ENCODE measurements at regions of chr15 and their contacts with region 1.

Region 1: DNA sequence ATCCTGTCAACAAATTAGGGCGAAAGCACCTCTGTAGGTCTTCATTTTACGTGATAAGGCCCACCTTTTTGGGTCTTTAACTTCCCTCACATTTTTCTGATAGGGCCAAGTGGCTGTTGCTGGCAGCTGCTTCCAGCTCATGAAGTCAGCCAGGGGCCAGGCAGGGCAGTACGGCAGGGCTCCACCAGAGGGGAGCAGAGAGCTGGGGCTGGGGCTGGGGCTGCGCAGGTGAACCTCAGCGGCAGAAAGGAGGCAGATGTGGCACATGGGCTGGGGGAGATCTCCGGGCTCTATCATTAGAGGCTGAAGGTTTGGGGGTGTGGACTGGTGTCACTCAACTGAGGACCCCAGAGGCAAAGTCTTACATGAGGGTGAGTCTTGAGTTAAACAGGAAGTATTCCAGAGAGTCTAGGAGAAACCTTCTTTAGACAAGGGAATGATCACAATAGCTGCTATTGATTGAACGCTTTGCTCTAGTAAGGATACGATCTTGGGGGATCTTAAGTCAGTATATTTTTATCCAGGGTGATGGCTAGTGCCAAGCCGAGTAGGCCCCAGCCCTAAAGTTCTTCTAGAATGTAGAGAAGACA is 62.8 kb upstream of the MEX3B start:
- DNase-seq: peak; percentile 59 to 79 (median 78)
- H3K4me3 ChIP-seq: no peak overlapping the region
- H3K27ac ChIP-seq: no peak overlapping the region
- H3K4me1 ChIP-seq: peaks cover 0 to 3% (median 0%) of the 10 kb centered on the region in 4 experiments
- H3K27me3 ChIP-seq: no peaks in the 10 kb centered on the region

Region 2: GRCh38 chr15:81410318-81410753 is 698.2 kb before region 1 on chr15:
- CTCF ChIA-PET with region 1: interaction called, 45 read pairs
- POLR2A ChIA-PET with region 1: no interaction called
- DNase-seq: peak; percentile 81 to 92 (median 89)
- H3K4me3 ChIP-seq: peak overlapping the region in 1 of 7 experiments; percentile 56
- H3K27ac ChIP-seq: no peak overlapping the region
- H3K4me1 ChIP-seq: peaks cover 4 to 24% (median 20%) of the 10 kb centered on the region in 4 experiments
- H3K27me3 ChIP-seq: no peaks in the 10 kb centered on the region

Region 3: DNA sequence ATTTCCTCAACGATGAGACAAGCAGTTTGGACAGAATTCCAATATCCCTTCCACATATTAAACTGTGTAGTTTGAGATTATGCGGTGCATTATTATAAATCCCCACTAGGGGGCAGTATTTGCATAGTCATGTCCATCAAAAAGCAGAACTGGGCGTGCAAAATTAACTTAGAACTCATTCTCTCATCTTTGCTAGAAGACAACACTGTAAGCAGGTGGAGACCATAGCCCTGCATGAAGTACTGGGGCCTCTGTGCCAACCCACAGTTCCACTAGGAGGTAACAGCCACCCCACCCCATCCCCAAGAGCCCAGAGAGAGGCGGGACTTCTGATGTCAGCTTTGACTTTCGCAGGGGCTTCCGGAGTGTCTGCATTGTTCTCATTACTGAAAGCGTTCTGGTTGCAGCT is 627.9 kb before region 1 on chr15:
- CTCF ChIA-PET with region 1: interaction called, 10 read pairs
- POLR2A ChIA-PET with region 1: interaction called, 4 read pairs
- DNase-seq: peak; percentile 64 to 81 (median 72)
- H3K4me3 ChIP-seq: no peak overlapping the region
- H3K27ac ChIP-seq: no peak overlapping the region
- H3K4me1 ChIP-seq: peaks cover 0 to 3% (median 0%) of the 10 kb centered on the region in 4 experiments
- H3K27me3 ChIP-seq: no peaks in the 10 kb centered on the region

Region 4: GRCh38 chr15:82040862-82041261 is 67.7 kb before region 1 on chr15:
- CTCF ChIA-PET with region 1: no interaction called
- POLR2A ChIA-PET with region 1: no interaction called
- DNase-seq: no peak
- H3K4me3 ChIP-seq: no peak overlapping the region
- H3K27ac ChIP-seq: no peak overlapping the region
- H3K4me1 ChIP-seq: peaks cover 0 to 33% (median 23%) of the 10 kb centered on the region in 4 experiments
- H3K27me3 ChIP-seq: no peaks in the 10 kb centered on the region

Region 5: GRCh38 chr15:82093774-82094211 is 14.8 kb before region 1 on chr15:
- CTCF ChIA-PET with region 1: no interaction called
- POLR2A ChIA-PET with region 1: no interaction called
- DNase-seq: no peak
- H3K4me3 ChIP-seq: no peak overlapping the region
- H3K27ac ChIP-seq: no peak overlapping the region
- H3K4me1 ChIP-seq: no peaks in the 10 kb centered on the region
- H3K27me3 ChIP-seq: no peaks in the 10 kb centered on the region

Region 6: GRCh38 chr15:82122746-82123400 is 14.3 kb after region 1 on chr15:
- CTCF ChIA-PET with region 1: interaction called, 10 read pairs
- POLR2A ChIA-PET with region 1: interaction called, 3 read pairs
- DNase-seq: no peak
- H3K4me3 ChIP-seq: no peak overlapping the region
- H3K27ac ChIP-seq: no peak overlapping the region
- H3K4me1 ChIP-seq: peaks cover 0 to 14% (median 8%) of the 10 kb centered on the region in 4 experiments
- H3K27me3 ChIP-seq: no peaks in the 10 kb centered on the region

Region 7: DNA sequence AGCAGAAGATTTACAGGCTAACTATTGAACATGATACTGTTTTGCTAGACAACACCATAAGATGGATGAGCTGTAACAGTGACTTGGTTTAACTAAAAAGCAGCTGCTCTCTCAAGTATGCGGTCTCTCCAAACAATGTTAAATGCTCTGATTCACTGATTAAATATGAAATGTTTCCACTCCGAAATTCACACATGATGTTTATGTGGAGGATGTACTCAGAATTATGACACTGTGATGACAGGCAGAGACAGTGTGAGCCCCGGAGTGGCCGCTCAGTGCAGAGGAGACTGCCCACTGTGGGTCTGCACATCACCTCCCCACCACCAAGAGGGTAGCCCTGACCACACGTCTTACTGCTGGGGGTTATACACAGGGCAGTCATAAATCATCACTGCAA is 21.2 kb after region 1 on chr15:
- CTCF ChIA-PET with region 1: interaction called, 13 read pairs
- POLR2A ChIA-PET with region 1: interaction called, 3 read pairs
- DNase-seq: peak in 2 of 3 donors; percentile 24 to 36
- H3K4me3 ChIP-seq: peak overlapping the region in 1 of 7 experiments; percentile 24
- H3K27ac ChIP-seq: no peak overlapping the region
- H3K4me1 ChIP-seq: peaks cover 10 to 35% (median 31%) of the 10 kb centered on the region in 4 experiments
- H3K27me3 ChIP-seq: no peaks in the 10 kb centered on the region

Region 8: GRCh38 chr15:82139823-82140268 is 31.3 kb after region 1 on chr15:
- CTCF ChIA-PET with region 1: interaction called, 31 read pairs
- POLR2A ChIA-PET with region 1: no interaction called
- DNase-seq: peak; percentile 42 to 69 (median 67)
- H3K4me3 ChIP-seq: peak overlapping the region in 1 of 7 experiments; percentile 31
- H3K27ac ChIP-seq: peak overlapping the region in 1 of 2 experiments; percentile 44
- H3K4me1 ChIP-seq: peaks cover 2 to 37% (median 25%) of the 10 kb centered on the region in 4 experiments
- H3K27me3 ChIP-seq: no peaks in the 10 kb centered on the region

Region 9: GRCh38 chr15:82197733-82198594 is 89.4 kb after region 1 on chr15:
- CTCF ChIA-PET with region 1: interaction called, 39 read pairs
- POLR2A ChIA-PET with region 1: no interaction called
- DNase-seq: peak; percentile 66 to 85 (median 80)
- H3K4me3 ChIP-seq: no peak overlapping the region
- H3K27ac ChIP-seq: no peak overlapping the region
- H3K4me1 ChIP-seq: no peaks in the 10 kb centered on the region
- H3K27me3 ChIP-seq: no peaks in the 10 kb centered on the region

Measured in common myeloid progenitor, CD34-positive (primary cell).